Activated CD4-positive, alpha-beta memory T cell treated with anti-CD3 and anti-CD28 coated beads, Interleukin-2, amount 10 ng/mL, durations not matched to agents 7 days and 5 days (primary cell): ENCODE measurements at regions of chr2 and their contacts with region 1.

Region 1: DNA sequence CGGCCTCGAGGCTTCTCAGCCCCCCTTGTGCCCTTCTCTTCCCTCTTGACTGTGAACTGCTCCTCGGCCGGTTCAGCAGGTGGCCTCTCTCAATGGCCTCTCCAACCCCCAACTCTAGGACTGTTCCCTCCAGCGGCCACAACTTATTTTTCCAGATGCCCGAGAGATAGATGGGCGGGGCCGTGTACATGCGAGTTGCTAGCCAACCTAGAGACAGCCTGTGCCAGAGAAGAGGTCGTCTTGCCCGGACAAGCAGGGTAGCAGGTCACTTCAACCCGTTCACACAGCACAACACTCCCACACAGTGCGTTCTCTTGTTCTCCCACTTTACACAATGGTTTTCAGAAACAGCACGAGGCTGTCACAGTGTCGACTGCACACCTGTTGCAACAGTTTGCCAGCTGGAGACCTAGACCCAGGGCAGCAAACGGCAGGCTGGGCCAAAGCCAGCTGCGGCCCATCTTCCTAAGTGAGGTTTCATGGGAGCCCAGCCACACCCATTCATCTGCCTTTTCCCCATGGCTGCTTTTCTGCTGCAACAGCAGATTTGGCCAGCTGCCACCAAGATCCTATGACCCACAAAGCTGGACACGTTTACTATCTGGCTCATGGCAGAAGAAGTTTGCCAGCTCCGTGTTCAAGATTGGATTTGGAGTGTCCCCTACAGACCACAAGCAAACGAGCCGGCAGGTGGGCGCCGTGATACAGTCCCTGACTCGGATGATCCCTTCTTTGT is 7.3 kb upstream of the PRLH start:
- DNase-seq: no peak
- H3K4me3 Mint-ChIP-seq: no peak overlapping the region
- H3K27ac Mint-ChIP-seq: no peak overlapping the region
- H3K4me1 Mint-ChIP-seq: peaks cover 12% of the 10 kb centered on the region
- H3K27me3 Mint-ChIP-seq: peaks cover 43% of the 10 kb centered on the region

Region 2: GRCh38 chr2:237500681-237501424 is 58.2 kb before region 1 on chr2:
- CTCF ChIA-PET with region 1: no interaction called
- POLR2A ChIA-PET with region 1: no interaction called
- DNase-seq: no peak
- H3K4me3 Mint-ChIP-seq: no peak overlapping the region
- H3K27ac Mint-ChIP-seq: no peak overlapping the region
- H3K4me1 Mint-ChIP-seq: peaks cover 6% of the 10 kb centered on the region
- H3K27me3 Mint-ChIP-seq: peaks cover 33% of the 10 kb centered on the region

Region 3: DNA sequence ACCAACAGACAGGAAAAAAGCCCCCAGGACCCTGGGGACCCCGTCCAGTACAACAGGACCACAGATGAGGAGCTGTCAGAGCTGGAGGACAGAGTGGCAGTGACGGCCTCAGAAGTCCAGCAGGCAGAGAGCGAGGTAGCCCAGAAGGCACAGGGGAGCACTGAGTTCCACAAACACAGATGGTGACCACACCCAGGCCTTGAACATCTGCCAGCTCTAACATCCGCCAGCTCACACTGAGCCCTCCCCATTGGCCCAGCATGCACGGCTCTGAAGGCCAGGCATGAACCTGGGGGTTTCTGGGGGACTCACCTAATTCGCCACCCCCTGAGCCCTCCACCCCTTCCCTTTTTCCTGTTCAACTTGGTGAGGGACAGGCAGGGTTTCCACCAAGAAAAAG is 18.3 kb before region 1 on chr2:
- CTCF ChIA-PET with region 1: no interaction called
- POLR2A ChIA-PET with region 1: no interaction called
- DNase-seq: no peak
- H3K4me3 Mint-ChIP-seq: no peak overlapping the region
- H3K27ac Mint-ChIP-seq: no peak overlapping the region
- H3K4me1 Mint-ChIP-seq: no peaks in the 10 kb centered on the region
- H3K27me3 Mint-ChIP-seq: no peaks in the 10 kb centered on the region

Region 4: DNA sequence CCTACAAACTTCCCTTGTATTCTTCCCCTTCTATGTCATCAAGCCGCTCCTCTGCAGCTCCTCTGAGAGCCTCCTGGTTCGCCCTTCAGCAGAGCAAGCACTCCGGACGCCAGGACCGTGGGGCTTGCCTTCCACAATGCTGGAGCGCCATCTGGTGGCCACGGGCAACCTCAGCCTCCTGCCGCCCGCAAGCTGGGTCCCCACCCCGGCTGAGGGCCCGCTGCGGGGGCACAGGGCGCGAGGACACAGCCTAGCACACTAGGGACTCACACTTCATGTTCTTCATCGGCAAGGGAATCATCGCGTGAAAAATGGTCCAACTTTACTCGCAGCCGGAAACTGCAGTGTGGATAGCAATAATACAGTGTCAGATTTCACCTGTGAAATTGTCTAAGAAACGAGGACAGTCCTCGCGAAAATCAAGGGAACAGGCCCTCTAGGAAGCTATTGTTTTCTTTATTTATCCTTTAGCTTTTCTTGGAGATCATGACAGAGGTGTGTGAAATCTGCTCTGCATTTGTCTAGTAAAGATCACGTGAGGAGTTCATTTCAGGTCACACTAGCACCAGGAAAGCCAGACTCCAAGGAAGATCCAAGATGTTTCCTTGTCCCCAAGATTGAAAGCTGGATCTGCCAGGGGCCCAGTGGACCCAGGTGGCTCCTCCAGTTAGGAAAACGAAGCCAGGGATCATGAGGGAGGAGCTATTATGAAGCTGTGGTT is 13.1 kb after region 1 on chr2:
- CTCF ChIA-PET with region 1: interaction called, 13 read pairs
- POLR2A ChIA-PET with region 1: no interaction called
- DNase-seq: peak; percentile 84
- H3K4me3 Mint-ChIP-seq: no peak overlapping the region
- H3K27ac Mint-ChIP-seq: no peak overlapping the region
- H3K4me1 Mint-ChIP-seq: no peaks in the 10 kb centered on the region
- H3K27me3 Mint-ChIP-seq: peaks cover 6% of the 10 kb centered on the region